Activated T-helper 2 cell treated with anti-CD3 and anti-CD28 coated beads, Interferon-gamma antibody, Interleukin-2, Interleukin-4, amounts not matched to agents 10 μg/mL and 5 μg/mL and 100 μg/mL, durations not matched to agents 14 hours and 24 hours and 36 hours (primary cell): ENCODE measurements at regions of chr4 and their contacts with region 1.

Region 1: DNA sequence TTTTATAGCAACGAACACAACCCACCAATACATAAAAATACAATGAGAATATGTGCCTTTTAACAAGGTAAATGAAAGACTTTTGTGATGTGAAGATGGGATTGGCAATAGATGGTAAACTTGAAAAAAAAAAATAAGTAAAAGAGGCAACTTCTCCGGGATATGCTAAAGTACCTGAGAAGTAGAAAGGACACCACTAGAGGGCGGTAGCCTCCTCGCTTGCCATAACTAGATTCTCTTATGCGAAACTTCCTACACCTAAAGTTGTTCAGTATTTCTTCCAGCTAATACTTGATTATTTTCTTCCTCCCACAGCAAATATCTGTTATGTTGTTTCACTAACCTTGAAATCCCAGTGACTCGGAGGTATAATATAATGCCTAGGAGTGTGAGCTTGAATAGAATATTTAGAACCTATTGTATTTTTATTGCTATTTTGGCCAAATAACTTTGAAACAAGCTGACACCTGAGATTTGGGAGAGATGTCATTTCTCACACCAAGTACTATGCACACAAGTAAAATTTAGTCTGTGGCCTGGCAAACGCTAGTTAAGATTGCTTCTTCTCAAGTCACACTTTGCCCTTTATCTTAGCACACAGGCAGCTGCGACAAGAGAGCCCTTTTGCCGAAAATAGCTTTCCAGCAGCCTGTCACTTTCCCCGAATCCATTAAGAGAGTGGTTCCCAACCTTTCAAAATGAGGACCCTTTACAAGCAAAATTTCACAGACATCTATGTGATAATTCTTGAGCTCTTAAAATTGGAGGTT is 44.9 kb upstream of the PDLIM5 start:
- DNase-seq: peak; percentile 18
- H3K4me3 Mint-ChIP-seq: no peak overlapping the region
- H3K27ac Mint-ChIP-seq: no peak overlapping the region
- H3K4me1 Mint-ChIP-seq: peaks cover 2% of the 10 kb centered on the region
- H3K27me3 Mint-ChIP-seq: peaks cover 35% of the 10 kb centered on the region

Region 2: DNA sequence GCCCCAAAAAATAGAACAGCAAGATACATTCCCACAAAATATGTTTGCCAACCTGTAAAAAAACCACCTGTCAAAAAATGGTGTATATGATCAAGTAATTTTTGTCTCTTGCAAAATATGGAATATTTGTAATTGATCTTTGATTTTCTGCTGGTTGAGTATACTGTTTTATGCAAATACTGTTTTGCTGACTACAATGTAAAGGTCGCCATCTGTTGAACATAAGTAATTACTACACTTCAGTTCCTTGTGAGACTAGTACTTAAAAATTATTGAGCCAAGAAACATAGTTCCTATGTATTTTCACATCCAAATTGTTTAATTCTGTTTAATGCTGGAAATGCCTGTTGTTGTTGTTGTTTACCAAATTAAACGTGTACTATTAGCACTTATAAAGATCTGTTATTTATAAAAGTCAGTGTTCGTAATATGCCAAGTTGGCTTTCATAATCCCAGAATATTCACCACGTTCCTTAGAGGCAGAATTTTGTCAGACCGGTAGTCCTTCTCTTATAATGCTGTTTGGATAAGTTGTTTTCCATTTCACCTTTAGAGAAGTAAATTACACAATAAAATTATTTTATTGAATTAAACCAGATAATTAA is 189.1 kb after region 1 on chr4:
- intact Hi-C with region 1: loop called (anchors 1 kb)
- DNase-seq: no peak
- H3K4me3 Mint-ChIP-seq: no peak overlapping the region
- H3K27ac Mint-ChIP-seq: no peak overlapping the region
- H3K4me1 Mint-ChIP-seq: no peaks in the 10 kb centered on the region
- H3K27me3 Mint-ChIP-seq: no peaks in the 10 kb centered on the region